HepG2 (cell line): ENCODE measurements at regions of chr5 and their contacts with region 1.

Region 1: DNA sequence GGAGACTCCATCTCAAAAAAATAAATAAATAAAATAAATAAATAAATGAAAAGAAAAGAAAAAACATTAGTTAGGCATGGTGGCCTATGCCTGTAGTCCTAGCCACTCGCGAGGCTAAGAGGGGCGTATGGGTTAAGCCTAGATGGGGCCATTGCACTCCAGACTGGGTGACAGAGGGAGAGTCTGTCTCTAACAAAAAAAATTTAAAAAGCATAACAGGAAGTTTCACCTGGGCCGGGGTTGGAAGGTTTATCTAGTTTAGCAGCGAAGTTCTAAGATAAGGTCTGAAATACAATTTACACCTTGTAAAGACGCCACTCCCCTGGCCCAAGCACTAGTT is 18.0 kb downstream of the ZMAT2 start:
- DNase-seq: no peak
- ATAC-seq: peak; percentile 2; the same call in 2 of the 3 replicates
- H3K4me3 ChIP-seq: peak overlapping the region; percentile 23 to 64 (median 60); a peak in 5 of 6 replicates
- H3K27ac ChIP-seq: peak overlapping the region; percentile 79
- H3K4me1 ChIP-seq: peaks cover 16% of the 10 kb centered on the region
- H3K27me3 ChIP-seq: no peaks in the 10 kb centered on the region
- CTCF ChIP-seq: no peak
- EP300 ChIP-seq: no peak
- POLR2A ChIP-seq: no peak; a peak in 1 of 4 replicates
- RAD21 ChIP-seq: no peak

Region 2: GRCh38 chr5:140557136-140557805 is 160.9 kb before region 1 on chr5 and contains the start of gene SRA1:
- CTCF ChIA-PET with region 1: no interaction called
- POLR2A ChIA-PET with region 1: interaction called, 10 read pairs
- in situ Hi-C with region 1: loop called (anchors 10 kb)
- intact Hi-C with region 1: loop called (anchors 5 kb)
- DNase-seq: peak; percentile 85
- ATAC-seq: peak; percentile 95
- H3K4me3 ChIP-seq: peak within 1 kb of the TSS; percentile 80 to 96 (median 84)
- H3K27ac ChIP-seq: peak within 1 kb of the TSS; percentile 55
- H3K4me1 ChIP-seq: peaks cover 37% of the 10 kb centered on the region
- H3K27me3 ChIP-seq: no peaks in the 10 kb centered on the region
- CTCF ChIP-seq: peak; percentile 33
- EP300 ChIP-seq: no peak; a peak in 1 of 4 replicates
- POLR2A ChIP-seq: peak; percentile 82 to 95
- RAD21 ChIP-seq: peak; percentile 51
- total RNA-seq, gene SRA1: 32.8 and 38.1 TPM in 2 replicates

Region 3: GRCh38 chr5:140764177-140765020 is 46.2 kb after region 1 on chr5:
- CTCF ChIA-PET with region 1: no interaction called
- POLR2A ChIA-PET with region 1: no interaction called
- in situ Hi-C with region 1: no loop called
- intact Hi-C with region 1: no loop called
- DNase-seq: no peak
- ATAC-seq: no peak
- H3K4me3 ChIP-seq: no peak overlapping the region
- H3K27ac ChIP-seq: no peak overlapping the region
- H3K4me1 ChIP-seq: no peaks in the 10 kb centered on the region
- H3K27me3 ChIP-seq: no peaks in the 10 kb centered on the region
- CTCF ChIP-seq: no peak
- EP300 ChIP-seq: no peak
- POLR2A ChIP-seq: no peak
- RAD21 ChIP-seq: no peak